CD8-positive, alpha-beta memory T cell (primary cell): ENCODE measurements at regions of chr13 and their contacts with region 1.

Region 1: DNA sequence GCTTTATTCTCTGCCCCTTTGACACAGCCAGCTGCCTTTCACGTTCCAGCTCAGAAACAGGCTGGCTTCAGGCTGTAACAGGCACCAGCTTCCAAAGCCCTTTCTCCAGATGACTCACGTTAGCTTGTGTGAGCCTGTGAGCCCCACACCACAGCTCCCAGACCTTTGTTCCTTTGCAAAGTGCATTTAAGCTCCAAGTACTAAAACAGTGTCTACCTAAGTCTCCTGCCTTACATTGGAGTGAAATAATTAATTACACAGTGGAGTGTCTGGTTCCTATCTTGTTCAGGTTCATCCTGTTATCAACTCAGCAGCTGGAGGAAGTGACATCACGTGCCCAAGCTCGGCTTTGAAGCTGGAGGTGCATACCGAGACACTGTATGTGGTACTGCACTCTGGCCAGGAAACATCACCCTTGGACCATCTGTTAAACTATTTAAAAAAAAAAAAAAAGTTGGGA is 475.8 kb downstream of the FOXO1 start:
- DNase-seq: peak; percentile 27 to 82 (median 63)
- H3K4me3 ChIP-seq: peak overlapping the region; percentile 20
- H3K4me3 Mint-ChIP-seq: peak overlapping the region; percentile 28 to 88 (median 68)
- H3K27ac ChIP-seq: no peak overlapping the region
- H3K27ac Mint-ChIP-seq: peak overlapping the region; percentile 66 to 96 (median 88)
- H3K4me1 ChIP-seq: peaks cover 67% of the 10 kb centered on the region
- H3K4me1 Mint-ChIP-seq: peaks cover 61 to 78% (median 76%) of the 10 kb centered on the region in 3 donors
- H3K27me3 ChIP-seq: no peaks in the 10 kb centered on the region
- H3K27me3 Mint-ChIP-seq: no peaks in the 10 kb centered on the region

Region 2: GRCh38 chr13:39998166-39998565 is 192.5 kb before region 1 on chr13:
- CTCF ChIA-PET with region 1: no interaction called
- POLR2A ChIA-PET with region 1: no interaction called
- DNase-seq: peak in 2 of 5 donors; percentile 13 to 48
- H3K4me3 ChIP-seq: no peak overlapping the region
- H3K4me3 Mint-ChIP-seq: peak overlapping the region in 3 of 7 donors; percentile 5 to 17 (median 15)
- H3K27ac ChIP-seq: no peak overlapping the region
- H3K27ac Mint-ChIP-seq: peak overlapping the region in 2 of 8 donors; percentile 2 to 15
- H3K4me1 ChIP-seq: peaks cover 21% of the 10 kb centered on the region
- H3K4me1 Mint-ChIP-seq: peaks cover 10 to 19% (median 12%) of the 10 kb centered on the region in 3 donors
- H3K27me3 ChIP-seq: no peaks in the 10 kb centered on the region
- H3K27me3 Mint-ChIP-seq: peaks cover 2% of the 10 kb centered on the region in 2 donors

Region 3: GRCh38 chr13:40206241-40207000 is 15.8 kb after region 1 on chr13:
- CTCF ChIA-PET with region 1: interaction called, 16 read pairs
- POLR2A ChIA-PET with region 1: interaction called, 22 read pairs
- DNase-seq: peak in 3 of 5 donors; percentile 45 to 77 (median 54)
- H3K4me3 ChIP-seq: peak overlapping the region; percentile 27
- H3K4me3 Mint-ChIP-seq: peak overlapping the region in 6 of 7 donors; percentile 64 to 82 (median 75)
- H3K27ac ChIP-seq: no peak overlapping the region
- H3K27ac Mint-ChIP-seq: peak overlapping the region; percentile 86 to 98 (median 96)
- H3K4me1 ChIP-seq: peaks cover 64% of the 10 kb centered on the region
- H3K4me1 Mint-ChIP-seq: peaks cover 56 to 77% (median 70%) of the 10 kb centered on the region in 3 donors
- H3K27me3 ChIP-seq: no peaks in the 10 kb centered on the region
- H3K27me3 Mint-ChIP-seq: peaks cover 0 to 1% of the 10 kb centered on the region in 2 donors